ENCODE measurements at regions of chr16 and their contacts with region 1.

Region 1: DNA sequence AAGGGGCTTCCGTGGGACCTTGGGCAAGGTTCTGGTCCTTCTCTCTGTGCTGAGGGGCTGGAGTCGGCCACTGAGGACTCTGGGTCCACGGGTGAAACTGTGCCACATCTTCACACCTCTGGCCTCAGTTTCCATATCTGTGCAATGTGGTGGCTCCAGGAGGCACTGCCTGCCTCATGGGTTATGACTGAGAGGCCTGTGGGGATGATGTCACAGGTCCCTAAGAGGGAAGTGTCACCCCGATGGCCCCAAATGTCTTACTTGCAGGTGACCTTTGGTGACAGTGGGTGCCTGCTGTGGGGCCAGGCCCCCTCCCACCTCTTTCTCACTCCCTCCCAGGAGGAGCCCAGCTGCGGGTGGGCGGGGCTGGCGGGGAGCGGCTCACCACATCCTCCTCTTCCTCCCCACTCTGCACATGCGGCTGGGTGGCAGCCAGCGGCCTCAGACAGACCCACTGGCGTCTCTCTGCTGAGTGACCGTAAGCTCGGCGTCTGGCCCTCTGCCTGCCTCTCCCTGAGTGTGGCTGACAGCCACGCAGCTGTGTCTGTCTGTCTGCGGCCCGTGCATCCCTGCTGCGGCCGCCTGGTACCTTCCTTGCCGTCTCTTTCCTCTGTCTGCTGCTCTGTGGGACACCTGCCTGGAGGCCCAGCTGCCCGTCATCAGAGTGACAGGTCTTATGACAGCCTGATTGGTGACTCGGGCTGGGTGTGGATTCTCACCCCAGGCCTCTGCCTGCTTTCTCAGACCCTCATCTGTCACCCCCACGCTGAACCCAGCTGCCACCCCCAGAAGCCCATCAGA is at the start of gene IL21R:
- DNase-seq: peak; percentile 71 to 94 (median 82)
- ATAC-seq: peak; percentile 80 to 81
- H3K4me3 Mint-ChIP-seq: peak within 1 kb of the TSS; percentile 97 to 99 (median 98)
- H3K27ac Mint-ChIP-seq: peak within 1 kb of the TSS; percentile 92 to 100 (median 99)
- H3K4me1 Mint-ChIP-seq: peaks cover 29 to 87% (median 73%) of the 10 kb centered on the region in 4 donors
- H3K27me3 Mint-ChIP-seq: no peaks in the 10 kb centered on the region
- polyA plus RNA-seq, gene IL21R: 26.5 to 47.1 (median 33.9) TPM

Region 2: GRCh38 chr16:27374804-27375425 is 27.1 kb before region 1 on chr16:
- POLR2A ChIA-PET with region 1: interaction called, 160 read pairs
- DNase-seq: peak in 5 of 10 donors; percentile 23 to 43 (median 38)
- ATAC-seq: peak; percentile 24 to 39
- H3K4me3 Mint-ChIP-seq: no peak overlapping the region
- H3K27ac Mint-ChIP-seq: no peak overlapping the region
- H3K4me1 Mint-ChIP-seq: peaks cover 24 to 51% (median 37%) of the 10 kb centered on the region in 4 donors
- H3K27me3 Mint-ChIP-seq: no peaks in the 10 kb centered on the region

Region 3: GRCh38 chr16:27426423-27427408 is 24.7 kb after region 1 on chr16:
- POLR2A ChIA-PET with region 1: interaction called, 23 read pairs
- DNase-seq: peak in 7 of 10 donors; percentile 44 to 84 (median 55)
- ATAC-seq: peak; percentile 95 to 96
- H3K4me3 Mint-ChIP-seq: peak overlapping the region in 9 of 10 donors; percentile 2 to 58 (median 32)
- H3K27ac Mint-ChIP-seq: peak overlapping the region; percentile 60 to 91 (median 82)
- H3K4me1 Mint-ChIP-seq: peaks cover 17 to 80% (median 50%) of the 10 kb centered on the region in 4 donors
- H3K27me3 Mint-ChIP-seq: no peaks in the 10 kb centered on the region

Region 4: DNA sequence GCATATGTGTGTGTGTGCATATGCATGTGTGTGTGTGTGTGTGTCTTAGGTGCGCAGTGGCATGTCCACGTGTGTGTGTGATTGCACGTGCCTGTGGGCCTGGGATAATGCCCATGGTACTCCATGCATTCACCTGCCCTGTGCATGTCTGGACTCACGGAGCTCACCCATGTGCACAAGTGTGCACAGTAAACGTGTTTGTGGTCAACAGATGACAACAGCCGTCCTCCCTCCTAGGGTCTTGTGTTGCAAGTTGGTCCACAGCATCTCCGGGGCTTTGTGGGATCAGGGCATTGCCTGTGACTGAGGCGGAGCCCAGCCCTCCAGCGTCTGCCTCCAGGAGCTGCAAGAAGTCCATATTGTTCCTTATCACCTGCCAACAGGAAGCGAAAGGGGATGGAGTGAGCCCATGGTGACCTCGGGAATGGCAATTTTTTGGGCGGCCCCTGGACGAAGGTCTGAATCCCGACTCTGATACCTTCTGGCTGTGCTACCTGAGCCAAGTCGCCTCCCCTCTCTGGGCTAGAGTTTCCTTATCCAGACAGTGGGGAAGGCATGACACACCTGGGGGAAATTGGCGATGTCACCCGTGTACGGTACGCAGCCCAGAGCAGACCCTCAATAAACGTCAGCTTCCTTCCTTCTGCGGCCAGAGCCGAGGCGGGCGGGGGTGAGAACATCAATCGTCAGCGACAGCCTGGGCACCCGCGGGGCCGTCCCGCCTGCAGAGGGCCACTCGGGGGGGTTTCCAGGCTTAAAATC is 47.6 kb after region 1 on chr16:
- POLR2A ChIA-PET with region 1: interaction called, 167 read pairs
- DNase-seq: peak; percentile 65 to 90 (median 84)
- ATAC-seq: peak; percentile 61 to 78
- H3K4me3 Mint-ChIP-seq: peak overlapping the region; percentile 58 to 86 (median 74)
- H3K27ac Mint-ChIP-seq: peak overlapping the region; percentile 81 to 99 (median 96)
- H3K4me1 Mint-ChIP-seq: peaks cover 48 to 93% (median 88%) of the 10 kb centered on the region in 4 donors
- H3K27me3 Mint-ChIP-seq: no peaks in the 10 kb centered on the region

Region 5: DNA sequence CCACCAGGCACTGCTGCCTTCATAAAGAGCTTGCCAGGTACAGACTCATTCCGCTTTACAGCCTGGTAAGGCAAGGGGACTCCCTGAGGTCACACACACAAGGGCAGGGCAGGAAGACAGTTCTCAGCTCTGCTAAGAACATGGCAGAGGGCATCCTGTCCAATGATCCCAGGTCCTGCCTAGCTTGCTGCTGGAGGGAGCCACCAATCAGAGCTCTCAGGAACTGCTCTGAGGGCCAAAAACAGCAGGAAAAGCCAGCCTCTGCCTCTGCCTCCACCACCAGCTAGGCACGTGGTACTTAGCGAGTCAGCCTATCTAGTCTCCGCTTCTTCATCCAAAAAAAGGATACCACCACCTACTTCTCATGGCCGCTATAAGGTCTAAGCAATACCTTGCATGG is 81.7 kb after region 1 on chr16:
- POLR2A ChIA-PET with region 1: no interaction called
- DNase-seq: no peak
- ATAC-seq: no peak
- H3K4me3 Mint-ChIP-seq: no peak overlapping the region
- H3K27ac Mint-ChIP-seq: peak overlapping the region in 2 of 10 donors; percentile 33 to 78
- H3K4me1 Mint-ChIP-seq: no peaks in the 10 kb centered on the region
- H3K27me3 Mint-ChIP-seq: no peaks in the 10 kb centered on the region

Measured in naive thymus-derived CD8-positive, alpha-beta T cell (primary cell).